ENCODE measurements at regions of chr2 and their contacts with region 1.

Region 1: DNA sequence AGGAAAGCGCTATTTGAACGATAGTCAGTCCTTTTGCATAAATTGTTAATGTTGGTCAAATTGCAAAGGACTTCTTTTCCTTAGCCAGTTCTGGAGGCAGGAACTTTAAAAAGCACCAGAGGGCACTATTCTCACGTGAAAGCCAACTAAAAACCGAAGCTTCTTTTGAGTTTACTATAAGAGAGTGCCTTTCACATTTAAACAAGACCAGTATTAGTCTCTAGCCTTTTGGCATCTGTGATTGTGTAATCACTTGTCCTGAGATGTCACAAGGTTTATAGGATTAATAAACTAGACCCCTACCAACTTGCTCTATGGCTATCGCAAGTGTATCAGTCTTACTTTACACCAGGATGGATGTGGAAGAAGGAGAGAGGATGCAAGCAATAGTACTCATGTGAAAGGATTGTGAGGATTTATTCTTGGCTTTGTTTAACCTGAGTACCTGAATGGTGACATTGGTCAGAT is 14.4 kb upstream of the STAT4 start:
- DNase-seq: peak in 1 of 2 experiments; percentile 40
- H3K4me3 ChIP-seq: no peak overlapping the region
- H3K4me3 Mint-ChIP-seq: no peak overlapping the region
- H3K27ac Mint-ChIP-seq: no peak overlapping the region
- H3K4me1 ChIP-seq: peaks cover 30% of the 10 kb centered on the region
- H3K4me1 Mint-ChIP-seq: peaks cover 24% of the 10 kb centered on the region
- H3K27me3 ChIP-seq: no peaks in the 10 kb centered on the region
- H3K27me3 Mint-ChIP-seq: peaks cover 4% of the 10 kb centered on the region
- CTCF ChIP-seq: peak; percentile 61 to 73

Region 2: DNA sequence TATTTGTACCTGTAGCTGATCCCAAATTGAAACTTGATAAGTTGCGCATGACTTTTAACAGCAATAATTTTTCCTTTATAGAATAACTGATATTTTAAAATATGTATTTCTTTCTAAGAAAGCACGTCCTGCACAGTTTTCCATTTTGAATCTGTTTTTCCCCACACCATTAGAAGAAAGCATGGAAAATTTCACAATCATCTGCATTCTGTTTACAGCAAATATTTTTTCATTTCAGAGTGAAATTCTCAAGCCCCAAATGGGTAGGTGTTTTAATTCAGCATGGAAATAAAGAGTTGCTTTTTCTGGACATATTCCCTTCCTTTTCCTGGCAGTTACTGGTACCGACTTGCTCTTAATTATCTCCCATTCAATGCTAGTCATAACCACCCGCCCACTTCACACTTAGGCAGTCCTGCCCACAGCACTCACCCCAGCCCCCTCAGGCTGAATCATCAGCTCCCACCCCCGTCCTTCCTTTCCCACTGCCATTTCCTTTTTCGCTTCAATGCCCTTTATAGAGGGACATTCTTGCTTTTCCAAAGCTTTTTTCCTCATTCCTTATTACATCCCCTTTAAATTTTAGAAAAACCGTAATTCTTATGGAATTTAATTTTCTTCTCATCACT is 373.7 kb before region 1 on chr2:
- CTCF ChIA-PET with region 1: no interaction called
- POLR2A ChIA-PET with region 1: no interaction called
- intact Hi-C with region 1: no loop called
- DNase-seq: no peak
- H3K4me3 ChIP-seq: no peak overlapping the region
- H3K4me3 Mint-ChIP-seq: no peak overlapping the region
- H3K27ac Mint-ChIP-seq: peak overlapping the region; percentile 10
- H3K4me1 ChIP-seq: peaks cover 39% of the 10 kb centered on the region
- H3K4me1 Mint-ChIP-seq: peaks cover 38% of the 10 kb centered on the region
- H3K27me3 ChIP-seq: no peaks in the 10 kb centered on the region
- H3K27me3 Mint-ChIP-seq: no peaks in the 10 kb centered on the region
- CTCF ChIP-seq: no peak

Region 3: DNA sequence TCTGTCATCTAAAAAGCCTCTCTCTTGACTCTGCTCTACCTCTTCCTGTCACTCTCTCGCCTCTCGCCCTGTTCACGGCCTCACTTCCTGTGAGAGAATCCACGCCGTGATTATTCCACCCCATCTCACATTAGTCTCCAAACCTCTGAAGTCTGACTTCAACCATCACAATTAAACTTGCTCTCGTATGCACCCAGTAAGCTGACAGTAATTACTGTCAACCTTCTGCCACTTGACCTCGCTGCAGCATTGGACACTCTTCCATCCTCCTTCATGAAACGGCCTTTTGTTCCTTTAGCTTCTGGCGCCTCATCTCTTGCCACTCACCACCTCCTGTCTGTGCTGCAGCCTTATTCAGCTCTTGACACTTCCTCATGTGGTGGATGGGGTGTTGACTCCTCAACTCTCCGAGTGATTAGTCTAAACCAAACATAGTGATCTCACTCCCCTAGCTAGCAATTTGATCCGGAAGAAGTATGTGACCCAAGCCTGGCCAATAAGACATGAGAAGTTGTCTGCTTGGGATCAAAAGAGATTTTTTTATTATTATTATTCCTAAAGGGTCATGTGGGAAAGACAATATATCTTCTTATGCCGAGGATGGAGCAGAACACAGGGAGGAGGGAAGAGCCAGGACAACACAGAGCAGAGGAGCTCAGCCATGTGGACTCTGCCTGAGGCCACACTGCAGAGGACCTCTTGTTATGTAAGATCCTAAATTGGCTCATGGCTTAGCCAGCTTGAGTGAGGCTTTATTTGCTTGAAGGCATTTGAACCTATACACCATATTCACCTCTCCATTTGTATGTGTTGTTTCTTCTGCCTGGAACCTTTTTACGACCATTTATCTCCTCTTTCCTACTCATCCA is 41.6 kb after region 1 on chr2:
- CTCF ChIA-PET with region 1: no interaction called
- POLR2A ChIA-PET with region 1: no interaction called
- intact Hi-C with region 1: no loop called
- DNase-seq: no peak
- H3K4me3 ChIP-seq: no peak overlapping the region
- H3K4me3 Mint-ChIP-seq: no peak overlapping the region
- H3K27ac Mint-ChIP-seq: no peak overlapping the region
- H3K4me1 ChIP-seq: no peaks in the 10 kb centered on the region
- H3K4me1 Mint-ChIP-seq: no peaks in the 10 kb centered on the region
- H3K27me3 ChIP-seq: no peaks in the 10 kb centered on the region
- H3K27me3 Mint-ChIP-seq: no peaks in the 10 kb centered on the region
- CTCF ChIP-seq: no peak

Region 4: GRCh38 chr2:191231995-191232394 is 66.8 kb after region 1 on chr2:
- CTCF ChIA-PET with region 1: no interaction called
- POLR2A ChIA-PET with region 1: no interaction called
- intact Hi-C with region 1: loop called (anchors 5 kb)
- DNase-seq: no peak
- H3K4me3 ChIP-seq: no peak overlapping the region
- H3K4me3 Mint-ChIP-seq: no peak overlapping the region
- H3K27ac Mint-ChIP-seq: no peak overlapping the region
- H3K4me1 ChIP-seq: no peaks in the 10 kb centered on the region
- H3K4me1 Mint-ChIP-seq: no peaks in the 10 kb centered on the region
- H3K27me3 ChIP-seq: no peaks in the 10 kb centered on the region
- H3K27me3 Mint-ChIP-seq: no peaks in the 10 kb centered on the region
- CTCF ChIP-seq: peak; percentile 28 to 39

Region 5: GRCh38 chr2:191302459-191303139 is 137.4 kb after region 1 on chr2:
- CTCF ChIA-PET with region 1: interaction called, 8 read pairs
- POLR2A ChIA-PET with region 1: no interaction called
- intact Hi-C with region 1: loop called (anchors 1 kb)
- DNase-seq: peak; percentile 56 to 59
- H3K4me3 ChIP-seq: no peak overlapping the region
- H3K4me3 Mint-ChIP-seq: no peak overlapping the region
- H3K27ac Mint-ChIP-seq: peak overlapping the region; percentile 18
- H3K4me1 ChIP-seq: peaks cover 26% of the 10 kb centered on the region
- H3K4me1 Mint-ChIP-seq: peaks cover 37% of the 10 kb centered on the region
- H3K27me3 ChIP-seq: no peaks in the 10 kb centered on the region
- H3K27me3 Mint-ChIP-seq: no peaks in the 10 kb centered on the region
- CTCF ChIP-seq: peak; percentile 58 to 65

Region 6: DNA sequence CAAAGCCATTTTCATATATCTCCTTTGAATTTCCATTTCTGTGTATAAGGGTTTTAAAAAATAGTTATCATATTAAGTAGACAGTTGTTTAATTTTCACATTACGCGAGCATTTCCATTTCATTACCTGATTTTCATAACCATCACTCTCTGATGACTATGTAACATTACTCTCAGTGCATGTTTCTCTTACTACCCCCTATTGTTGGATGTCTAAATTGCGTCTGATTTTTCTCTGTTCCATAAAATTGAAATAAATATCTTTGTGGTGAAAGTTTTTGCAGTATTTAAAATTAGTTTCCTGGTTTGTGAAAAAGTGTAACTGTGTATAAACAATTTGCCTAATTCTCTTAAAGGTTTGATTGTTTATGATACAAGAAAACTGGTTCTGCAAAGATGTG is 203.8 kb after region 1 on chr2:
- CTCF ChIA-PET with region 1: no interaction called
- POLR2A ChIA-PET with region 1: no interaction called
- intact Hi-C with region 1: loop called (anchors 5 kb)
- DNase-seq: no peak
- H3K4me3 ChIP-seq: no peak overlapping the region
- H3K4me3 Mint-ChIP-seq: no peak overlapping the region
- H3K27ac Mint-ChIP-seq: no peak overlapping the region
- H3K4me1 ChIP-seq: no peaks in the 10 kb centered on the region
- H3K4me1 Mint-ChIP-seq: peaks cover 6% of the 10 kb centered on the region
- H3K27me3 ChIP-seq: no peaks in the 10 kb centered on the region
- H3K27me3 Mint-ChIP-seq: no peaks in the 10 kb centered on the region
- CTCF ChIP-seq: peak in 1 of 2 experiments; percentile 15

Region 7: GRCh38 chr2:191521608-191522208 is 356.5 kb after region 1 on chr2:
- CTCF ChIA-PET with region 1: interaction called, 4 read pairs
- POLR2A ChIA-PET with region 1: no interaction called
- intact Hi-C with region 1: loop called (anchors 1 kb)
- DNase-seq: peak in 1 of 2 experiments; percentile 15
- H3K4me3 ChIP-seq: no peak overlapping the region
- H3K4me3 Mint-ChIP-seq: no peak overlapping the region
- H3K27ac Mint-ChIP-seq: no peak overlapping the region
- H3K4me1 ChIP-seq: no peaks in the 10 kb centered on the region
- H3K4me1 Mint-ChIP-seq: peaks cover 13% of the 10 kb centered on the region
- H3K27me3 ChIP-seq: no peaks in the 10 kb centered on the region
- H3K27me3 Mint-ChIP-seq: no peaks in the 10 kb centered on the region
- CTCF ChIP-seq: peak; percentile 62 to 74

Measured in Caco-2 (cell line).